B cell (primary cell): ENCODE measurements at regions of chrX and their contacts with region 1.

Region 1: GRCh38 chrX:118603981-118604380 is 108.4 kb downstream of the DOCK11 start:
- DNase-seq: peak; percentile 61
- ATAC-seq: peak; percentile 51
- H3K4me3 ChIP-seq: no peak overlapping the region
- H3K4me3 Mint-ChIP-seq: no peak overlapping the region
- H3K27ac ChIP-seq: no peak overlapping the region
- H3K27ac Mint-ChIP-seq: peak overlapping the region; percentile 75
- H3K4me1 ChIP-seq: no peaks in the 10 kb centered on the region
- H3K4me1 Mint-ChIP-seq: peaks cover 4% of the 10 kb centered on the region
- H3K27me3 ChIP-seq: no peaks in the 10 kb centered on the region
- H3K27me3 Mint-ChIP-seq: no peaks in the 10 kb centered on the region
- CTCF ChIP-seq: peak; percentile 75

Region 2: GRCh38 chrX:118459494-118459893 is 144.5 kb before region 1 on chrX:
- CTCF ChIA-PET with region 1: interaction called, 70 read pairs
- POLR2A ChIA-PET with region 1: interaction called, 5 read pairs
- intact Hi-C with region 1: loop called (anchors 1 kb)
- DNase-seq: peak; percentile 50
- ATAC-seq: no peak
- H3K4me3 ChIP-seq: no peak overlapping the region
- H3K4me3 Mint-ChIP-seq: no peak overlapping the region
- H3K27ac ChIP-seq: no peak overlapping the region
- H3K27ac Mint-ChIP-seq: no peak overlapping the region
- H3K4me1 ChIP-seq: no peaks in the 10 kb centered on the region
- H3K4me1 Mint-ChIP-seq: no peaks in the 10 kb centered on the region
- H3K27me3 ChIP-seq: no peaks in the 10 kb centered on the region
- H3K27me3 Mint-ChIP-seq: peaks cover 3% of the 10 kb centered on the region
- CTCF ChIP-seq: peak; percentile 64

Region 3: GRCh38 chrX:118484220-118484903 is 119.6 kb before region 1 on chrX:
- CTCF ChIA-PET with region 1: interaction called, 10 read pairs
- POLR2A ChIA-PET with region 1: no interaction called
- intact Hi-C with region 1: no loop called
- DNase-seq: no peak
- ATAC-seq: no peak
- H3K4me3 ChIP-seq: no peak overlapping the region
- H3K4me3 Mint-ChIP-seq: no peak overlapping the region
- H3K27ac ChIP-seq: no peak overlapping the region
- H3K27ac Mint-ChIP-seq: no peak overlapping the region
- H3K4me1 ChIP-seq: no peaks in the 10 kb centered on the region
- H3K4me1 Mint-ChIP-seq: no peaks in the 10 kb centered on the region
- H3K27me3 ChIP-seq: no peaks in the 10 kb centered on the region
- H3K27me3 Mint-ChIP-seq: no peaks in the 10 kb centered on the region
- CTCF ChIP-seq: no peak